ENCODE measurements at regions of chr13 and their contacts with region 1.

Region 1: GRCh38 chr13:110615322-110616102 is at the start of gene NAXD:
- DNase-seq: peak; percentile 62
- ATAC-seq: peak; percentile 87
- H3K4me3 ChIP-seq: peak within 1 kb of the TSS; percentile 63
- H3K27ac ChIP-seq: peak within 1 kb of the TSS; percentile 86
- H3K4me1 ChIP-seq: peaks cover 20% of the 10 kb centered on the region
- H3K27me3 ChIP-seq: no peaks in the 10 kb centered on the region
- CTCF ChIP-seq: no peak
- EP300 ChIP-seq: no peak
- POLR2A ChIP-seq: peak; percentile 83
- RAD21 ChIP-seq: no peak
- polyA plus RNA-seq, gene NAXD: 1.5 to 5.0 TPM

Region 2: DNA sequence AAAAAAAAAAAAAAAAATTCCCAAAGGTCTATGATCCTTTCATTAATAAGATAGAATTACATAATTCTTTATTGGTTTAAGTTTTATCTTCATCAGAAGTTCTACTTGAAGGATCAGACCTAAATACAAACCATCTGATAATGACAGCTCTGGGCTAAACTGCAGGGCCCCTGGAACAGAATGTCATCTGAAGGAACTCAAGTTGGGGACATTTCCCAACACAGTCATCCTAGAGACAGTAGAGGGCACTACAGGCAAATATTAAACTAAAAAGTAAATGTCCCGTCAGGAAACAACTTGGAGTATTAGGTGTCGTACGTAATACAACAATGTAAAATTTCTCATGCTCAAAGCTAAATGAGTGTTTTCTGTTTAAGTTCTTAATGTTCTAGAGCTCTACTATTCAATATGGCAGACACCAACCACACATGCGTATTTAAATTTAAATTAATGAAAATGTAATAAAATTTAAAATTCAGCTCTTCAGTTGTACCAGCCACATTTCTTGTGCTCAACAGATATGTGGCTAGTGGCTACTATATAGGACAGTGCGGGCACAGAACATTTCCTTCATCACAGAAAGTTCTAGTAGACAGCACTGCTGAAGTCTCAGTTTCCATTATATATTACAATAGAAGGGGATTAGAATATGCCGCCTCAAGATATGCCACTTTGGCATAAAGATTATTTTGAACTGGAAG is 21.9 kb before region 1 on chr13:
- CTCF ChIA-PET with region 1: interaction called, 18 read pairs
- POLR2A ChIA-PET with region 1: interaction called, 11 read pairs
- RAD21 ChIA-PET with region 1: interaction called, 10 read pairs
- SMC1A ChIA-PET with region 1: interaction called, 13 read pairs
- in situ Hi-C with region 1: no loop called
- intact Hi-C with region 1: loop called (anchors 2 kb)
- DNase-seq: no peak
- ATAC-seq: peak; percentile 97
- H3K4me3 ChIP-seq: no peak overlapping the region
- H3K27ac ChIP-seq: no peak overlapping the region
- H3K4me1 ChIP-seq: no peaks in the 10 kb centered on the region
- H3K27me3 ChIP-seq: no peaks in the 10 kb centered on the region
- CTCF ChIP-seq: peak; percentile 60 to 71 (median 66)
- EP300 ChIP-seq: no peak
- POLR2A ChIP-seq: no peak
- RAD21 ChIP-seq: peak; percentile 86

Region 3: DNA sequence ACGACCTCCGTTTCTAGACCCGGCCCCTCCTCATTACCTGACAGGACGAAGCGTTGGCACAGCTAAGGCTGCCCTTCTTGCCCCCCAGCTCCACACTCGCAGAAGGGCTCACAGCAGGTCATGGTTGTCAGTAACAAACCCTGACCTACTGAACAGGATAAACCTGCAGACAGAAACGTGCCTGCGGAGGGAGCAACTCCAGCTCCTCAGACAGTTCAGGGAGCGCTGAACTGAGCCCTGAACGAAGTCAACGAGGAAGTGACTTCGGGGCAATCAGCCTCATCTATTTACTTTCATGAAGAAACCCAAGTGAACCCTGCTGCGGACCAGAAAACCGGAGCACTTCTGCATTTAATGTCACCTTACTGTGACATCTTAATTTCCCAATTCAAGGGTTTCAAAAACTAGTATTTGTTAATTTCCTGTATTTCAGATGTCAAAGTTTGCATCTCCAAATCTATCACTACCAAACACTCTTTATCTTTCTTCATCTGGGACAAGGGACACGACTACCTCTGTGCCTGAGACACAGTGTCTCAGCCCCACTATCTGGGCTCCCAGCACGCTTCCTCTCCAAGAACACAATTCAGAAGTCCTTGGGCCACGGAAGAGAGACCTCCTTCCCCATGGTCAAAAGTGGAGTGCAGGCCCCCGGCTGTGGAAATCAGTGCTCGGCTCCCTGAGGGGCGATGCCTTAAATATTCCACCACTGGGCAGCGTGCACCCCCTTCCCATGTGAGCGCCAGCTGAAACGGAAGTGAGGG is 50.2 kb after region 1 on chr13:
- CTCF ChIA-PET with region 1: no interaction called
- POLR2A ChIA-PET with region 1: no interaction called
- RAD21 ChIA-PET with region 1: no interaction called
- SMC1A ChIA-PET with region 1: no interaction called
- in situ Hi-C with region 1: no loop called
- intact Hi-C with region 1: no loop called
- DNase-seq: no peak
- ATAC-seq: no peak
- H3K4me3 ChIP-seq: no peak overlapping the region
- H3K27ac ChIP-seq: no peak overlapping the region
- H3K4me1 ChIP-seq: no peaks in the 10 kb centered on the region
- H3K27me3 ChIP-seq: no peaks in the 10 kb centered on the region
- CTCF ChIP-seq: no peak
- EP300 ChIP-seq: no peak
- POLR2A ChIP-seq: no peak
- RAD21 ChIP-seq: no peak

Region 4: DNA sequence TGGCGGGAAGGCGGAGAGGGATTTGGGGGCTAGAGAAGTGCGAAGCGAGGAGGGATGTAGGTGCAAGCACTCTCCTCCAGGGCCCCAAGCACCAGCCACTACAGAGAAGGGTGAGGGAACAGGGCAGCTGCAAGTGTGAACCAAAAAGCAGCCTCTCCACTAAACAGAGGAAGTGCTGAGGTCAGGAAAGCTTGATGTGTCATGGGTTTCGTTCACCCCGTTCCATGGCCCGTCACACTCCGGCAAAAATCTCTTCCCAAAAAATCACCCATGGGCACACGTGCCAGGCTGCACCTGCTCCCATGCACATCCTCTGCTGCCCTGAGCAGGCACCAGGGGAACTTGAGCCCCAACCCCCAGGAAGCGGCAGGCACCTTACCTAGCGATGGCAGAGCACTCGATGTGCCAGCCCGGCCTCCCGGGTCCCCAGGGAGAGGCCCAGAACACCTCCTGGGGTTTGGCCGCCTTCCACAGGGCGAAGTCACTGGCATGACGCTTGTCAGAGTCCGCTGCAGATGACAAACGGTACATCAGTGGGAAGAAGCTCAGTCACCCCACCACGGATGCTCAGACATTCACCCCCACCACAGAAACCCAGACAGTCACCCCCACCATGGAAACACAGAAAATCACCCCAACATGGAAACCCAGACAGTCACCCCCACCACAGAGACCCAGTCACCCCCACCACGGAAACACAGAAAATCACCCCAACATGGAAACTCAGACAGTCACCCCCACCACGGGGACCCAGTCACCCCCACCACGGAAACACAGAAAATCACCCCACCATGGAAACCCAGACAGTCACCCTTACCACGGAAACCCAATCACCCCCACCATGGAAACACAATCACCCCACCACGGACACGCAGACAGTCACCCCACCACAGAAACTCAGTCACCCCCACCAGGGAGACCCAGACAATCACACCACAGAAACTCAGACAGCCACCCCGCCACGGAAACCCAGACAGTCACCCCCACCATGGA is 61.4 kb after region 1 on chr13:
- CTCF ChIA-PET with region 1: interaction called, 7 read pairs
- POLR2A ChIA-PET with region 1: interaction called, 8 read pairs
- RAD21 ChIA-PET with region 1: interaction called, 4 read pairs
- SMC1A ChIA-PET with region 1: interaction called, 4 read pairs
- in situ Hi-C with region 1: no loop called
- intact Hi-C with region 1: loop called (anchors 5 kb)
- DNase-seq: peak; percentile 63
- ATAC-seq: peak; percentile 89
- H3K4me3 ChIP-seq: peak overlapping the region; percentile 24; the same call in 1 of the 2 replicates
- H3K27ac ChIP-seq: peak overlapping the region; percentile 86
- H3K4me1 ChIP-seq: peaks cover 16% of the 10 kb centered on the region
- H3K27me3 ChIP-seq: no peaks in the 10 kb centered on the region
- CTCF ChIP-seq: no peak
- EP300 ChIP-seq: no peak
- POLR2A ChIP-seq: 0 out of 2 replicates have a peak, but pooled peaks have one; percentile 16
- RAD21 ChIP-seq: no peak